ENCODE measurements at regions of chr6 and their contacts with region 1.

Region 1: DNA sequence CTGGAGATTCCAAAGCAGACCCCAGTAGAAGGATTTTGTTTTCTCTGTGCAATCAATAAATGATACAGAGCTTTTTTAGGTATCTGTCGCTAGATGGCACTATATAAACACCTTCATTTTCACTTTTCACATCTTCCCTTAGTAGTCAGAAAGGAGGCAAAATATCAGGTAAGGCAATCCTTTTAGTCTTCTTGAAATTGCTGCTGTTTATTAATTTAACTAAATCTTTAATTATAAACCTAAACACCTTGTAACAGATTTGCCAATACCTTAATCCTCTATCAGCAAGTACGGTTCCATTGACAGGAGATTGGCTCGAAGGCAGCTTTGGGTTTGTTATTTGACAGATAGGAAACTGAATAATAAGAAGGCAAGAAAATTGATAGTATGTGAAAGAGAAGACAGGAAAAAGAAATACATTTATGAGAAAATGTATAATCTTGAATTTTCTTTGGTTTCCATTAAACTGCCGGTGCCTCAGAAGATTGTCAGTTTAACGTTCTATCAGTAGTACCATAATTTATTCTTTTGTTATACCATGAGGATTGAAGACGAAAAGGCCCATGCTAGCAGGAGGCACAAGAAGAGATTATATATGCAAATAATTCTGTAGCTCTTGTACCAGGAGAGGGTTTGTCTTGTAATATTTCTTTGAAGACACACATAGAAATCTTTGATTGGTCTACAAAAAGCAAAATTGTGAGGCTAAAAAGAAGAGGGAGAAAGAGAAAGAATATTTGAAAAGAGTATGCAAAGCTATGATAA is 23.5 kb upstream of the IBTK start:
- DNase-seq: peak; percentile 21
- H3K4me3 ChIP-seq: no peak overlapping the region
- H3K27ac ChIP-seq: no peak overlapping the region
- H3K4me1 ChIP-seq: peaks cover 15% of the 10 kb centered on the region
- H3K27me3 ChIP-seq: no peaks in the 10 kb centered on the region
- CTCF ChIP-seq: peak; percentile 54 to 60

Region 2: GRCh38 chr6:82006027-82006738 is 264.9 kb before region 1 on chr6:
- CTCF ChIA-PET with region 1: no interaction called
- dilution Hi-C with region 1: no loop called
- in situ Hi-C with region 1: no loop called
- intact Hi-C with region 1: no loop called
- DNase-seq: peak; percentile 41
- H3K4me3 ChIP-seq: no peak overlapping the region
- H3K27ac ChIP-seq: no peak overlapping the region
- H3K4me1 ChIP-seq: no peaks in the 10 kb centered on the region
- H3K27me3 ChIP-seq: no peaks in the 10 kb centered on the region
- CTCF ChIP-seq: peak; percentile 66 to 83

Region 3: GRCh38 chr6:82331031-82331773 is 60.1 kb after region 1 on chr6:
- CTCF ChIA-PET with region 1: no interaction called
- dilution Hi-C with region 1: no loop called
- in situ Hi-C with region 1: no loop called
- intact Hi-C with region 1: loop called (anchors 5 kb)
- DNase-seq: peak; percentile 92
- H3K4me3 ChIP-seq: no peak overlapping the region
- H3K27ac ChIP-seq: peak overlapping the region; percentile 2
- H3K4me1 ChIP-seq: peaks cover 14% of the 10 kb centered on the region
- H3K27me3 ChIP-seq: no peaks in the 10 kb centered on the region
- CTCF ChIP-seq: peak; percentile 15 to 47

Region 4: DNA sequence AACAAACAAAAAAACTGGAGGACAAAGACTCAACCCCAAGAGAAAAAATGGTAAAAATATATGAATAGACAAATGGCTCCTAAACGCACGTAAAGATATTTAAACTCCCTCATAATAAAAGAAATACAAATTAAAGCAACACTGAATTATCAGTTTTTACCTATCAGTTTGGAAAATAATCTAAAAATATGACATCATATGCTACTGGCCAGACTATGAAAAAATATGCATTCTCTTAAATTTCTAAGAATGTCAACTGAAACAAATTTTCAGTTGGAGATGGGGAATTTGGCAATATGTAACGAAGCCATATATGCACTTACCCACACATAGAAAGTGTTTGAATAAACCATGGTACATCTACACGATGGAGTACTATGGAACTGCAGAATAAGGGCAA is 270.2 kb after region 1 on chr6:
- CTCF ChIA-PET with region 1: no interaction called
- dilution Hi-C with region 1: no loop called
- in situ Hi-C with region 1: no loop called
- intact Hi-C with region 1: loop called (anchors 2 kb)
- DNase-seq: no peak
- H3K4me3 ChIP-seq: no peak overlapping the region
- H3K27ac ChIP-seq: no peak overlapping the region
- H3K4me1 ChIP-seq: no peaks in the 10 kb centered on the region
- H3K27me3 ChIP-seq: no peaks in the 10 kb centered on the region
- CTCF ChIP-seq: no peak

Region 5: GRCh38 chr6:82589509-82590206 is 318.6 kb after region 1 on chr6:
- CTCF ChIA-PET with region 1: interaction called, 5 read pairs
- dilution Hi-C with region 1: no loop called
- in situ Hi-C with region 1: no loop called
- intact Hi-C with region 1: loop called (anchors 1 kb)
- DNase-seq: peak; percentile 58
- H3K4me3 ChIP-seq: no peak overlapping the region
- H3K27ac ChIP-seq: no peak overlapping the region
- H3K4me1 ChIP-seq: peaks cover 2% of the 10 kb centered on the region
- H3K27me3 ChIP-seq: no peaks in the 10 kb centered on the region
- CTCF ChIP-seq: peak; percentile 36 to 41

Region 6: GRCh38 chr6:82616386-82617028 is 345.4 kb after region 1 on chr6:
- CTCF ChIA-PET with region 1: no interaction called
- dilution Hi-C with region 1: no loop called
- in situ Hi-C with region 1: loop called in 1 of 2 experiments (anchors 25 kb)
- intact Hi-C with region 1: loop called (anchors 2 kb)
- DNase-seq: no peak
- H3K4me3 ChIP-seq: no peak overlapping the region
- H3K27ac ChIP-seq: no peak overlapping the region
- H3K4me1 ChIP-seq: no peaks in the 10 kb centered on the region
- H3K27me3 ChIP-seq: no peaks in the 10 kb centered on the region
- CTCF ChIP-seq: peak; percentile 2 to 38

Region 7: DNA sequence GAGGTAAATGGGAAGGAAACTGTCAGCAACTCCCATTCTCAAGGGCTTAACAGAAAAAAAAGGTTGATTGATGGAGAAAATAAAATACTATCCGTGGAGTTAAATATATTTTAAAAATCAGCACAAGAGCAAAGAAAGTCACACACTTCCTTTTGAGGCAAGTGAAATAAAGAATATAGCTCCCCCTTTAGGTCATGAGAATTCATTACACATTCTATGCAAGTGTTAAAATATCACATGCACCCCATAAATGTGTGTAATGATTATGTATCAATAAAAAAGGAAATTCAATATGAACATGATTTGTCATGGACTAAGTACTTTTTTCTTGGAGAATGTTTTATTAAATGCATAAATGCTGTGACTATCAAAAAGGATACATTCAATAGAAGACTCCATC is 441.8 kb after region 1 on chr6:
- CTCF ChIA-PET with region 1: no interaction called
- dilution Hi-C with region 1: no loop called
- in situ Hi-C with region 1: no loop called
- intact Hi-C with region 1: loop called (anchors 10 kb)
- DNase-seq: no peak
- H3K4me3 ChIP-seq: no peak overlapping the region
- H3K27ac ChIP-seq: no peak overlapping the region
- H3K4me1 ChIP-seq: no peaks in the 10 kb centered on the region
- H3K27me3 ChIP-seq: no peaks in the 10 kb centered on the region
- CTCF ChIP-seq: peak; percentile 51

Measured in mammary epithelial cell (primary cell).